PC-9 (cell line): ENCODE measurements at regions of chr17 and their contacts with region 1.

Region 1: DNA sequence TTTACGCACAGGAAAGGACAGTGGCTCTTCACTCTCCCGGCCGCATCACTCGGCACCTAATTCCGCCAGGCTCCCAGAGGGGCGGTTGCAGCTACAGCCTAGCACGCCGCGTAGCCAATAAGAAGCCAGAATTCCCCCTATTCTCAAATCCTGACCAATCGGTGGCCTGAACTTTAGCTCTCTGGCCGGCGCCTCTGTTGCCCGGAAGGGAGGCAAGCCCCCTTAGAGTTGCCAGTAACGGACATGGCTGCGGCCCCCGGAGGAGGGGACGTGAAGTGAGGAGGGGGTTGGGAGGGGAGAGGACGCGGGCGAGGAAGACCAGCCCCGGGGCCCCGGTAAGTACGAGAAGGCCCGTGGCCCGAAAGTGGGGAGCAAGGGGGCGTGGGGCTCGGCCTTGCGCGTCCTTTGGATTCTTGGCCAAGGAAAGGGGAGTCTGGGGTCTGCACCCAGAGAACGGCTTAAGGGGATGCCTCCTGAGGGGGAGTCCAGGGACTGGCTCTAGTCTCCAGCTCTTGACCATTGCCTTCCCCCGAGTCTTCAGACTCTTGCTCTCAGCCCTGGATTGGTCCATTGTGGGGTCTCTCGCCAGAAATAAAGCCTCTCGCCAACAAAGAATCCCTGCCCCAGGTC is at the start of gene TMEM94:
- DNase-seq: peak; percentile 91 to 92
- H3K4me3 ChIP-seq: peak within 1 kb of the TSS; percentile 88
- H3K27ac ChIP-seq: peak within 1 kb of the TSS; percentile 47
- H3K4me1 ChIP-seq: peaks cover 49% of the 10 kb centered on the region
- H3K27me3 ChIP-seq: no peaks in the 10 kb centered on the region
- CTCF ChIP-seq: no peak
- total RNA-seq, gene TMEM94: 78.9 and 95.7 TPM in 2 replicates

Region 2: DNA sequence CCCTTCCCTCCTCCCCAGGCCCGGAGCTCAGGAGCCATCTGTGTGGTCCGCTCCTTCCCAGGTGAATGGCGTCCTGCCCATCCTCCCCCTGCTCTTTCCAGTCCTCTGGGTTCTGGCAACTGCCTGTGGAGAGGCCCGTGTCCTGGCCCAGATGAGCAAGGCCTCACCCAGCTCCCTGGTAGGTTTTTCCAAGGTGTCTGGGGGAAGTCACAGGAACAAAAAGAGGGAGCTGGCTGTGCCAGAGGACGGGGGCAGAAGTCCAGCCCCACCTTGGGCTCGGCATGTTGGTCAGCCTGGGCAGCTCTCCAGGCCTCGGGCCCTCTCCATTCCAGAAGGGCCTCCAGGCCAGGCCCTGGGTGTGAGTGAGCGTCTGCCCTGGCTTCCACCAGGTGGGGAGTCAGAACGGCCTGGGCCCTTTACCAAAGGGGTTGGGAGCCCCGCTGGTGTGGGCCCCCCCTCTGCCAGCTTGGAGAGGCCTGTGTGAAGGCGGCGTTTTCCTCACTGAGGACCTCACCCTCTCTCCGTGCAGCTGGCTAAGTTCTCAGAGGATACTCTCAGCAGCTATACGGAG is 33.7 kb after region 1 on chr17:
- CTCF ChIA-PET with region 1: no interaction called
- POLR2A ChIA-PET with region 1: no interaction called
- intact Hi-C with region 1: no loop called
- DNase-seq: no peak
- H3K4me3 ChIP-seq: no peak overlapping the region
- H3K27ac ChIP-seq: no peak overlapping the region
- H3K4me1 ChIP-seq: no peaks in the 10 kb centered on the region
- H3K27me3 ChIP-seq: no peaks in the 10 kb centered on the region
- CTCF ChIP-seq: no peak

Region 3: DNA sequence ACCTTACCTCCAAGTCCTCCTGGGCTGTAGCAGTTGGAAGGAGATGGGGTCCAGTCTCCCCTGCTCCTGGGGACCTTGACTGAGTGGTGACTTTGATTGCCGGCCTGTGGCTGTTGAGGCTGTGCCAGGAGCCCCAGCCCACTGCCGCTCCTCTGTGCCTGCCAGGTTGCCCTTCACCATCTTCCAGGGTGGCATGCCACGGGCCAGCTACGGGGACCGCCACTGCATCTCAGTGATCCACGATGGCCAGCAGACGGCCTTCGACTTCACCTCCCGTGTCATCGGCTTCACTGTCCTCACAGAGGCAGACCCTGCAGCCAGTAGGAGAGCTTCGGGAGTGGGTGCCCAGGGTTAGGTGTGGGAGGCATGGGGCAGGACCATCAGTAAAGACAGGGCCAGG is 107.7 kb after region 1 on chr17:
- CTCF ChIA-PET with region 1: no interaction called
- POLR2A ChIA-PET with region 1: interaction called, 33 read pairs
- intact Hi-C with region 1: no loop called
- DNase-seq: no peak
- H3K4me3 ChIP-seq: no peak overlapping the region
- H3K27ac ChIP-seq: no peak overlapping the region
- H3K4me1 ChIP-seq: peaks cover 29% of the 10 kb centered on the region
- H3K27me3 ChIP-seq: no peaks in the 10 kb centered on the region
- CTCF ChIP-seq: no peak